ENCODE measurements at regions of chrX and their contacts with region 1.

Region 1: DNA sequence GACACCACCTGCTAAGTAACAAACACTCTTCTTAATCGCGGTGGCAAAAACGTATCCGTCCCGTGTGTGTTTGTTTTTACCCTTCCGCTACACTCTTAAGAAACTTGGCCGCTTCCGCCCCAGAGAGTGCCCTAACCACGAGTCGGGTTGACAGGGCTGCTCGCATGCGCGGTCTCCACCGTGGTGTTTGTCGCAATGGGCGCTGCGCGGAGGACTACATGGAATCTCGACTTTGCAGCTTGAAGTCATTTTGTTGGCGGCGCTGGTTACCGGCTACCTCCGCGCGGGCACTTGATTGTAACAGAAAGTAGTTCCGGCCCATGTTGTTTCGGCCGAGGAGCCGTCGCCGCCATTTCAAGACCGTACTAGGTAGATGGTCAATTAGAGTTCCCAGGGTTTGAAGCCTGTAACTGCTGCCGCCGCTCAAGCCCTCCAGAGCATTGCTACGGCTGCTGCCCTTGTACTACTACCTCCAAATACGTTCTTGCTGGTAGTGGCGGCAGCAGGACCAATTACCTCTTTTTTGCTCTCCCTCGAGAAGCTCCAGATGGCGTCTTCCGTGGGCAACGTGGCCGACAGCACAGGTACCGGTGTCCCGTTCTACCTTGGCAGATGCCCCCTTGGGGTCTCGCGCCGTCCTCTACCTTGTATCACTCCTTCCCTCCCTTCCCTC is at the start of gene OGT:
- DNase-seq: peak; percentile 84 to 97 (median 92)
- H3K4me3 ChIP-seq: peak within 1 kb of the TSS; percentile 96
- H3K4me3 Mint-ChIP-seq: peak within 1 kb of the TSS; percentile 94 to 100 (median 97)
- H3K27ac ChIP-seq: peak within 1 kb of the TSS; percentile 89
- H3K27ac Mint-ChIP-seq: peak within 1 kb of the TSS; percentile 94 to 98 (median 96)
- H3K4me1 ChIP-seq: peaks cover 17% of the 10 kb centered on the region
- H3K4me1 Mint-ChIP-seq: peaks cover 19 to 34% (median 27%) of the 10 kb centered on the region in 3 donors
- H3K27me3 ChIP-seq: no peaks in the 10 kb centered on the region
- H3K27me3 Mint-ChIP-seq: peaks cover 0 to 14% of the 10 kb centered on the region in 2 donors
- total RNA-seq, gene OGT: 211 to 216 TPM

Region 2: GRCh38 chrX:71143508-71143907 is 389.4 kb before region 1 on chrX:
- CTCF ChIA-PET with region 1: no interaction called
- POLR2A ChIA-PET with region 1: no interaction called
- DNase-seq: no peak
- H3K4me3 ChIP-seq: no peak overlapping the region
- H3K4me3 Mint-ChIP-seq: no peak overlapping the region
- H3K27ac ChIP-seq: no peak overlapping the region
- H3K27ac Mint-ChIP-seq: peak overlapping the region in 1 of 8 donors; percentile 37
- H3K4me1 ChIP-seq: peaks cover 10% of the 10 kb centered on the region
- H3K4me1 Mint-ChIP-seq: peaks cover 8 to 31% (median 11%) of the 10 kb centered on the region in 3 donors
- H3K27me3 ChIP-seq: no peaks in the 10 kb centered on the region
- H3K27me3 Mint-ChIP-seq: peaks cover 0 to 13% of the 10 kb centered on the region in 2 donors

Region 3: GRCh38 chrX:71492231-71493065 is 40.4 kb before region 1 on chrX:
- CTCF ChIA-PET with region 1: interaction called, 8 read pairs
- POLR2A ChIA-PET with region 1: interaction called, 20 read pairs
- DNase-seq: peak; percentile 14 to 59 (median 21)
- H3K4me3 ChIP-seq: peak overlapping the region; percentile 56
- H3K4me3 Mint-ChIP-seq: peak overlapping the region; percentile 80 to 93 (median 85)
- H3K27ac ChIP-seq: peak overlapping the region; percentile 38
- H3K27ac Mint-ChIP-seq: peak overlapping the region; percentile 54 to 97 (median 74)
- H3K4me1 ChIP-seq: no peaks in the 10 kb centered on the region
- H3K4me1 Mint-ChIP-seq: peaks cover 12 to 21% (median 17%) of the 10 kb centered on the region in 3 donors
- H3K27me3 ChIP-seq: no peaks in the 10 kb centered on the region
- H3K27me3 Mint-ChIP-seq: no peaks in the 10 kb centered on the region

Region 4: GRCh38 chrX:71504346-71504745 is 28.5 kb before region 1 on chrX:
- CTCF ChIA-PET with region 1: no interaction called
- POLR2A ChIA-PET with region 1: no interaction called
- DNase-seq: no peak
- H3K4me3 ChIP-seq: no peak overlapping the region
- H3K4me3 Mint-ChIP-seq: no peak overlapping the region
- H3K27ac ChIP-seq: no peak overlapping the region
- H3K27ac Mint-ChIP-seq: no peak overlapping the region
- H3K4me1 ChIP-seq: no peaks in the 10 kb centered on the region
- H3K4me1 Mint-ChIP-seq: no peaks in the 10 kb centered on the region
- H3K27me3 ChIP-seq: no peaks in the 10 kb centered on the region
- H3K27me3 Mint-ChIP-seq: peaks cover 0 to under 1% of the 10 kb centered on the region in 2 donors

Region 5: GRCh38 chrX:71599965-71600364 is 67.1 kb after region 1 on chrX:
- CTCF ChIA-PET with region 1: no interaction called
- POLR2A ChIA-PET with region 1: no interaction called
- DNase-seq: peak in 1 of 5 donors; percentile 41
- H3K4me3 ChIP-seq: no peak overlapping the region
- H3K4me3 Mint-ChIP-seq: no peak overlapping the region
- H3K27ac ChIP-seq: no peak overlapping the region
- H3K27ac Mint-ChIP-seq: peak overlapping the region in 5 of 8 donors; percentile 27 to 66 (median 54)
- H3K4me1 ChIP-seq: no peaks in the 10 kb centered on the region
- H3K4me1 Mint-ChIP-seq: peaks cover 21 to 35% (median 32%) of the 10 kb centered on the region in 3 donors
- H3K27me3 ChIP-seq: no peaks in the 10 kb centered on the region
- H3K27me3 Mint-ChIP-seq: peaks cover 0 to 2% of the 10 kb centered on the region in 2 donors